SK-N-SH (cell line): ENCODE measurements at regions of chr4 and their contacts with region 1.

Region 1: GRCh38 chr4:39469429-39470077 is 10.7 kb downstream of the LIAS start:
- DNase-seq: peak; percentile 62
- H3K4me3 ChIP-seq: peak overlapping the region in 1 of 2 experiments; percentile 16; a peak in 1 of 4 replicates
- H3K27ac ChIP-seq: peak overlapping the region; percentile 50 to 68
- H3K4me1 ChIP-seq: peaks cover 2 to 5% of the 10 kb centered on the region in 2 experiments; a peak in 2 of 4 replicates
- H3K27me3 ChIP-seq: no peaks in the 10 kb centered on the region
- CTCF ChIP-seq: peak; percentile 98
- EP300 ChIP-seq: peak in 1 of 2 experiments; percentile 55; a peak in 1 of 4 replicates
- RAD21 ChIP-seq: peak; percentile 91

Region 2: DNA sequence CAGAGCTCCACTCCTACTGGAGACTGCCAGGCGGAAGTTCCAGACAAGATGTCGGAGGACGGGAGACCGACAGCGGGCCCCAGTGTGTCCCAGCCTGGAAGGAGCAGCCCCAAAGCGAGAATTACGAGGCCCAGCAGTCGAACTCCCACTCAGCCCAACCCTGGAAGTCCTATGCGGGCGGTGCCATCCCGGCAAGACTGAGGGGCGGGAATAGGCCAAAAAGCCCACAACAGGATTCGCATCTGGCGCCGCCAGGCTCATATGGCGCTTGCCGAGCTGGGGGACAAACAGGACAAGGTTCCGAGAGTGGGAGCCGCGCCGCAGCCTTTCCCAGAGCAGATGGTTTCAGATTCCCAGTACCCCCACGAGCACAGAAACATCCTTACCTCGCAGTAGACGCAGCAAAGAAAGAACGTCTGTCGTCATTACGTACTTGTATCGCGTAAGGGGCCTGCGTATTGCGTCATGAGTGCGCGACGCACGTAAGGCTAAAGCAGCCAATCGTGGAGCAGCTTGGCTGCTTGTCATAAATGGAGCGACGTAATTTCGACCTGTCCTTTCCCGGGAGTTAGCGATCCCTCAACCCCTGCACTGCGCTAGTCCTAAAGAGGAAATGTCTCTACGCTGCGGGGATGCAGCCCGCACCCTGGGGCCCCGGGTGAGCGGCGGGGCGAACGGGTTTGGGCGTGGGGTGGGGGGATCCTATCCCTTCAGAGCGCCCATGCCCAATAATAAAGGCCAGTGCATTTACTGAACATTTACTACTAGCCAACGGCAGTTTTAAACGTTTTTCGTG is 10.8 kb before region 1 on chr4 and contains the starts of genes LIAS and RPL9:
- CTCF ChIA-PET with region 1: interaction called, 23 read pairs
- POLR2A ChIA-PET with region 1: interaction called, 7 read pairs
- DNase-seq: peak; percentile 94
- H3K4me3 ChIP-seq: peak within 1 kb of the TSS; percentile 97 to 99
- H3K27ac ChIP-seq: peak within 1 kb of the TSS; percentile 84 to 96
- H3K4me1 ChIP-seq: peaks cover 11 to 12% of the 10 kb centered on the region in 2 experiments; a peak in 3 of 4 replicates
- H3K27me3 ChIP-seq: no peaks in the 10 kb centered on the region
- CTCF ChIP-seq: no peak
- EP300 ChIP-seq: no peak
- RAD21 ChIP-seq: no peak
- polyA plus RNA-seq, gene LIAS: 9.2 and 10.8 TPM in 2 replicates
- polyA plus RNA-seq, gene RPL9: 1,564 and 2,425 TPM in 2 replicates

Region 3: GRCh38 chr4:39510348-39510929 is 40.9 kb after region 1 on chr4:
- CTCF ChIA-PET with region 1: interaction called, 14 read pairs
- POLR2A ChIA-PET with region 1: no interaction called
- DNase-seq: no peak
- H3K4me3 ChIP-seq: no peak overlapping the region
- H3K27ac ChIP-seq: no peak overlapping the region
- H3K4me1 ChIP-seq: 0 out of 4 replicates have a peak, but pooled peaks cover 0 to 4% of the 10 kb centered on the region in 2 experiments
- H3K27me3 ChIP-seq: no peaks in the 10 kb centered on the region
- CTCF ChIP-seq: no peak
- EP300 ChIP-seq: no peak
- RAD21 ChIP-seq: no peak

Region 4: GRCh38 chr4:39527273-39528060 is 57.9 kb after region 1 on chr4 and contains the start of gene UGDH:
- CTCF ChIA-PET with region 1: interaction called, 13 read pairs
- POLR2A ChIA-PET with region 1: interaction called, 12 read pairs
- DNase-seq: peak; percentile 98
- H3K4me3 ChIP-seq: peak within 1 kb of the TSS; percentile 84 to 89
- H3K27ac ChIP-seq: peak within 1 kb of the TSS; percentile 92 to 96
- H3K4me1 ChIP-seq: peaks cover 3 to 6% of the 10 kb centered on the region in 2 experiments; a peak in 2 of 4 replicates
- H3K27me3 ChIP-seq: no peaks in the 10 kb centered on the region
- CTCF ChIP-seq: peak; percentile 11; the same call in 1 of the 2 replicates
- EP300 ChIP-seq: no peak; a peak in 1 of 4 replicates
- RAD21 ChIP-seq: no peak
- polyA plus RNA-seq, gene UGDH: 41.4 and 41.6 TPM in 2 replicates

Region 5: GRCh38 chr4:39977489-39978377 is 508.2 kb after region 1 on chr4 and contains the start of gene PDS5A:
- CTCF ChIA-PET with region 1: interaction called, 18 read pairs
- POLR2A ChIA-PET with region 1: no interaction called
- DNase-seq: peak; percentile 98
- H3K4me3 ChIP-seq: peak within 1 kb of the TSS; percentile 82 to 99
- H3K27ac ChIP-seq: peak within 1 kb of the TSS; percentile 87 to 89
- H3K4me1 ChIP-seq: peaks cover 6 to 10% of the 10 kb centered on the region in 2 experiments; a peak in 2 of 4 replicates
- H3K27me3 ChIP-seq: no peaks in the 10 kb centered on the region
- CTCF ChIP-seq: peak; percentile 70
- EP300 ChIP-seq: no peak
- RAD21 ChIP-seq: peak; percentile 58
- polyA plus RNA-seq, gene PDS5A: 14.1 and 18.1 TPM in 2 replicates